Head of caudate nucleus (tissue), 42 donors: ENCODE measurements at regions of chr13 and their contacts with region 1.

Region 1: DNA sequence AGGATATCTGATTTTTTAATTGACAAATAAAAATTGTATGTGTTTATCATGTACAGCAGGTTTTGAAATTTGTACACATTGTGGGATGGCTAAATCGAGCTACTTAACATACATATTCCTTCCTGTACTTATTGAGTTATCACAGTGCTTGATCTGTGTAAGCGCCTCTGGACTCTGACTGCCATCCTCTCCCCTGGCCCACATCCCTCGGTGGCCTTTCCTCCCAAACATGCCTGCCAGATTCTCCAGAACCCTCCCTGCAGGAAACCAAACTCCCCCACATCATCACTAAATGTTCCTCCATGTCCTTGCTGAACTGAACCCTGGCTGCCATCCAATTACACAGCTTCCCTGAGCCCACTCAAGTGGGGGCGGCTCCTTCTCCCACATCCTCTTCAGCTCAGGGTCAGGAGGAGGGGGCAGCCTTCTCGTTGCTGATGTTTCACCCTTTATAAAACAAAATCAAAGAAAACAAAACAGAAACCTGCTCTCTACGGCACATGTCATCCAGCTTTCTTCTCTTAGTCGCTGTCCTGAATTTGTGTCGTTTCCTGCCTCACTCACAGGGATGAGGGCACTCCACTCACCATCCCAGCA is 97.1 kb upstream of the SPATA13 start:
- DNase-seq: peak in 26 of 42 donors; percentile 41 to 88 (median 63)

Region 2: DNA sequence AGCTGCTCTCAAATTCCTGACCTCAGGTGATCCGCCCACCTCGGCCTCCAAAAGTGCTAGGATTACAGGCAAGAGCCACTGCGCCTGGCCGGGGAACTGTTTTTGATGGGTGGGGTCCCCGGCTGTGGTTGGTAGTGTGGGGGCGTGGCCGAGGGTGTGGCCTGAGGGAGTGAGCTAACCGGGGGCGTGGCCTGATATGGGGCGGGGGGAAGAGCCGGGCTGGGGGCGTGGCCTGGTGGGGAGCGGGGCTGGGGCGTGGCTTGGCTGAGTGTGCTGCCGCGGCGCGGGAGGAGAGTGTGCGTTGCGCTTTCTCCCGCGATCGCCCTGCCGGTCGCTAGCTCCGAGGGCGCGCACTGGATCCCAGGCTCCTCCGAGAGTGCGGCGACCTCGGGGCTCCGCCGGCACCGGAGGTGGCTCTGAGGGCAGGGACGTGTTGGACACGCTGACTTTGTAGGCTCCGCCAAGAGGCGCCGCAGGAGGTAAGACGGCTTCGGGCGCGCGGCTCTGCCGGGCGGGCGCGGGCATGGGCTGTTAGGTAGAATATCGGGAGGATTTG is 97.2 kb after region 1 on chr13 and contains the start of gene SPATA13:
- intact Hi-C with region 1: loop called (anchors 10 kb)
- DNase-seq: peak; percentile 89 to 99 (median 97)